Spleen (tissue), 13 donors: ENCODE measurements at regions of chr17 and their contacts with region 1.

Region 1: DNA sequence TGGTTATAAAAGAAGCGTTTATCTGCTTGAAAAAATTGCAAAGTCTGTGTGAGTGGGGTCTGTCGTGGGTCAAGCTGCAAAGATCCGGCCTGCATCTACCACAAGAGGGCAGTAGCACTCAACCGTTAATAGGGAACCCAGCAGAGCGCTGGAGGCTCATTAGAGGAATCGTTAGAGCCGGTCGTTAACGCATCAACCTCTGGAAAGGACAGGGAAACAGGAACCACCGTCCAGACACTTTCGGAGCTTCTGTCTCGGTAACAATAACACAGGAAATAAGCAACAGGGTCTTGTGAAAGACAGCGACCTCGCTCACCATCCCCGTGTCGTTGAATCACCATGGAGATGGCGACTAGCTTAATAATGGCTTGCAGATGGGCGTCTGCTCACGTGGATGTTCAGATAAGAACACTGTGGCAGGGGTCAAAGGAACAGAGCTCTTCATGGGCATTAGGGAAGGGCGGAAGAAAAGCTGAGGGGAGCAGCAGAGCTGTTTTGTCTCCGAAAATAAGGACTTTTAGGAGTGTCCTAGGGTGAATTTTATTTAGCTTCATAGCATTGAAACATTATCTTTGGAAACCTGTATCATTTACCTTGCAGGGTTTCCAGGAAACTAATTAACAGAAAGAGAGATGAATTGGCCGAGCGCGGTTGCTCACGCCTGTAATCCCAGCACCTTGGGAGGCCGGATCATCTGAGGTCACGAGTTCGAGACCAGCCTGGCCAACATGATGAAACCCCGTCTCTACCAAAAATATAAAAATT is 11.9 kb upstream of the NSRP1 start:
- DNase-seq: peak; percentile 88
- H3K4me3 ChIP-seq: peak overlapping the region in 7 of 8 donors; percentile 6 to 65 (median 24)
- H3K27ac ChIP-seq: peak overlapping the region in 6 of 8 donors; percentile 30 to 74 (median 57)
- H3K4me1 ChIP-seq: peaks cover 0 to 22% (median 12%) of the 10 kb centered on the region in 6 donors
- H3K27me3 ChIP-seq: no peaks in the 10 kb centered on the region
- CTCF ChIP-seq: peak; percentile 67 to 89 (median 84)
- POLR2A ChIP-seq: no peak

Region 2: DNA sequence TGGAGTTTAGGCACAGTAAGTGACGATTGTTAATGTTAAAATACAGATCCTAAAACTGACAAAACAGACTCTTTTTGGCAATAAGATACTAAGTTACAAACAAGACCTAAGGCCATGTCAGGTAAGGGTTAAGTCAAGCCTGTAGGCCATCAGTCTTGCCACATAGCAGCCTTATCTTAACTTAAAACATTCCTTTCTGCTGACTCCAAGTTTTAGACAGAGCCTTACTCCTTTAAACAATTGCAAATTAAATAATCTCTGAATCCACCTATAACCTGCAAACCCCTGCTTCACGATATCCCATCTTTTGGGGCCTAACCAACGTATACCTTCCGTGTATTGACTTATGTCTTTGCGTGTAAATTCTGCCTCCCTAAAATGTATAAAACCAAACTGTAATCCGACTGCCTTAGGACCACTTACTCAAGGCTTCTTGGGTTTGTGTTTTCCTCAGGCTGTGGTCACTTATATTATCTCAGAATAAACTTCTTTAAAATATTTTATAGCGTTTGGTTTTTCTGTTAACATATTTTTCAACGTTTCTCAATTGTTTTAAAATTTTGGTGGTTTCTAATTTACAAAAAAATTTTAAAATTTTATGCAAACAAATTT is 98.9 kb before region 1 on chr17:
- intact Hi-C with region 1: no loop called
- DNase-seq: no peak
- H3K4me3 ChIP-seq: no peak overlapping the region
- H3K27ac ChIP-seq: no peak overlapping the region
- H3K4me1 ChIP-seq: no peaks in the 10 kb centered on the region
- H3K27me3 ChIP-seq: no peaks in the 10 kb centered on the region
- CTCF ChIP-seq: no peak
- POLR2A ChIP-seq: no peak

Region 3: DNA sequence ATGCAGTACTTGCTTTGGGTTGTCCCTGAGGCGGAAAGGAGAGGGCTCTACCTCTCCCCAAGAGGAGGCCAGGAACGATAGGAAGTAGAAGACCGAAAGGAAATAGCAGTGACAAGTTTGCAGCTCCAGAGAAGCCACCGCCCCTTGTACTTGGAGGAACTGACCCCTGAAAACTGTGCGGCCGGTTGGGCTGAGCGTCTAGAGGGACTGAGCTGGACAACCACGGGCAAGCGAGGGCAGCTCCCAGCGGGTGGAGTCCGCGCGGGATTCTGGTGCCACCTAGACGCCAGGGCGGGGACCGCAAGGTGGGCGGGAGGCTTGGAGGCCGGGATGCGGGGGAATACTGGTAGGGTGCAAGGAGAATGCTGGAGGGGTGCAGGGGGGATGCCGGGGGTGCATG is 132.0 kb after region 1 on chr17:
- intact Hi-C with region 1: no loop called
- DNase-seq: peak; percentile 80
- H3K4me3 ChIP-seq: peak overlapping the region in 2 of 8 donors; percentile 34 to 61
- H3K27ac ChIP-seq: no peak overlapping the region
- H3K4me1 ChIP-seq: peaks cover 11 to 43% (median 27%) of the 10 kb centered on the region in 6 donors
- H3K27me3 ChIP-seq: peaks cover 8 to 78% (median 49%) of the 10 kb centered on the region in 7 donors
- CTCF ChIP-seq: peak in 1 of 11 experiments; percentile 9
- POLR2A ChIP-seq: no peak

Region 4: GRCh38 chr17:30336369-30337171 is 231.8 kb after region 1 on chr17:
- intact Hi-C with region 1: loop called (anchors 10 kb)
- DNase-seq: no peak
- H3K4me3 ChIP-seq: no peak overlapping the region
- H3K27ac ChIP-seq: peak overlapping the region in 2 of 8 donors; percentile 63 to 74
- H3K4me1 ChIP-seq: peaks cover 5 to 40% (median 18%) of the 10 kb centered on the region in 6 donors
- H3K27me3 ChIP-seq: no peaks in the 10 kb centered on the region
- CTCF ChIP-seq: peak; percentile 30 to 75 (median 61)
- POLR2A ChIP-seq: no peak